SK-N-SH (cell line): ENCODE measurements at regions of chr17 and their contacts with region 1.

Region 1: DNA sequence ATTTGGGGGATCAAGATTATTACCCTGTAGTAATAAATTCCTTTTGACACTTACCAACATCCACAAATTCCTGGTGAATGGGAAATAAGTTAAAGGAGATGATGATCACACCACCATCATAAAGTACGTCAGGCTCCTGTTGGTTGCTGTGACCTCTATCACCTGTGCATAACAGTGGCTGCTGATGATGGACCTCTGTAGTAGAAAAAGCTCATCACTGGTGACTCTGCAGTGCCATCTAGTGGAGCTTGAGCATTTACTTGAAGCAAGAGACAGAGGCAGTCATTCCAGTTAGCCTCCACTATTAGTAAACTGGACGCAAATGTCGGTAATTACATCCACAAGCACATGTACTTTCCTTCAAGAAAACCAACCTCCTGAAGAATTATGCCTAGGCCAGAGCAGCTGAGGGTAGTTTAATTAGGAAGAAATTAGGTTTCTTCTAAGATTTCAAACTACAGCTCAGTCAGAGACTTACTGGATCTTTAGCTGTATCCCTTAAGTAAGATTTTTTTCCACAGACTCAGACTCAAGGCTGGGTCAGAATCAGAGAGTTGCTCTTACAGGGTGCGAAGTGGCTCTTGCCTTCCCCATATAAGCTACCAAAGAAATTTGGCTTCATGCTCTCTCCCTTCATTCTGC is 39.3 kb downstream of the CYB561 start:
- DNase-seq: peak; percentile 82
- H3K4me3 ChIP-seq: no peak overlapping the region
- H3K27ac ChIP-seq: peak overlapping the region; percentile 76 to 84
- H3K4me1 ChIP-seq: peaks cover 17 to 21% of the 10 kb centered on the region in 2 experiments
- H3K27me3 ChIP-seq: no peaks in the 10 kb centered on the region
- CTCF ChIP-seq: peak; percentile 99
- EP300 ChIP-seq: no peak; a peak in 1 of 4 replicates
- RAD21 ChIP-seq: peak; percentile 99

Region 2: DNA sequence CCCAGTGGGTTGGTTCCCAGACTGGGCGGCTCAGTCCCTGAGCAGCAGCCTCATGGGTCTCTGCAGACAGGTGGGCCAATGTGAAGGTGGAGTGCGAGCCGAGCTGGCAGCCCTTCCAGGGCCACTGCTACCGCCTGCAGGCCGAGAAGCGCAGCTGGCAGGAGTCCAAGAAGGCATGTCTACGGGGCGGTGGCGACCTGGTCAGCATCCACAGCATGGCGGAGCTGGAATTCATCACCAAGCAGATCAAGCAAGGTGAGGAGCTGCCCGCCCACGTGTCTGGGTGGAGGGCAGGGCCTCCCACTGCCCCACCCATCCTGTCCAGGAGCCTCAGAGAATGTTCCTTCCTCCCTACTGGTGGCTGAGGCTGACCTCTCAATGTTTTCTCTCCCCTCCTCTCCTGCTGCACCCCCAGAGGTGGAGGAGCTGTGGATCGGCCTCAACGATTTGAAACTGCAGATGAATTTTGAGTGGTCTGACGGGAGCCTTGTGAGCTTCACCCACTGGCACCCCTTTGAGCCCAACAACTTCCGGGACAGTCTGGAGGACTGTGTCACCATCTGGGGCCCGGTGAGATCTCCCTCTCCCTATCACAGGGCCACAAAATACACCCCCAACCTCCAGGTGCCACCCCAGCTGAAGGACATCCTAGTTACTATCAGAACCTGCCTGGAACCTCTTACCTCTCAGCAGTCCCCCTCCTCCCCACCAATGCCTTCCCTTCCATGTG is 735.1 kb before region 1 on chr17:
- CTCF ChIA-PET with region 1: interaction called, 28 read pairs
- POLR2A ChIA-PET with region 1: no interaction called
- DNase-seq: peak; percentile 62
- H3K4me3 ChIP-seq: no peak overlapping the region
- H3K27ac ChIP-seq: peak overlapping the region in 1 of 2 experiments; percentile 16; a peak in 1 of 4 replicates
- H3K4me1 ChIP-seq: peaks cover 0 to 20% of the 10 kb centered on the region in 2 experiments; a peak in 1 of 4 replicates
- H3K27me3 ChIP-seq: no peaks in the 10 kb centered on the region
- CTCF ChIP-seq: no peak
- EP300 ChIP-seq: no peak
- RAD21 ChIP-seq: no peak

Region 3: GRCh38 chr17:62987137-62987536 is 419.7 kb before region 1 on chr17:
- CTCF ChIA-PET with region 1: interaction called, 14 read pairs
- POLR2A ChIA-PET with region 1: no interaction called
- DNase-seq: peak; percentile 18
- H3K4me3 ChIP-seq: no peak overlapping the region
- H3K27ac ChIP-seq: no peak overlapping the region; a peak in 1 of 4 replicates
- H3K4me1 ChIP-seq: peaks cover 0 to 18% of the 10 kb centered on the region in 2 experiments; a peak in 1 of 4 replicates
- H3K27me3 ChIP-seq: no peaks in the 10 kb centered on the region
- CTCF ChIP-seq: peak; percentile 55
- EP300 ChIP-seq: no peak
- RAD21 ChIP-seq: no peak

Region 4: DNA sequence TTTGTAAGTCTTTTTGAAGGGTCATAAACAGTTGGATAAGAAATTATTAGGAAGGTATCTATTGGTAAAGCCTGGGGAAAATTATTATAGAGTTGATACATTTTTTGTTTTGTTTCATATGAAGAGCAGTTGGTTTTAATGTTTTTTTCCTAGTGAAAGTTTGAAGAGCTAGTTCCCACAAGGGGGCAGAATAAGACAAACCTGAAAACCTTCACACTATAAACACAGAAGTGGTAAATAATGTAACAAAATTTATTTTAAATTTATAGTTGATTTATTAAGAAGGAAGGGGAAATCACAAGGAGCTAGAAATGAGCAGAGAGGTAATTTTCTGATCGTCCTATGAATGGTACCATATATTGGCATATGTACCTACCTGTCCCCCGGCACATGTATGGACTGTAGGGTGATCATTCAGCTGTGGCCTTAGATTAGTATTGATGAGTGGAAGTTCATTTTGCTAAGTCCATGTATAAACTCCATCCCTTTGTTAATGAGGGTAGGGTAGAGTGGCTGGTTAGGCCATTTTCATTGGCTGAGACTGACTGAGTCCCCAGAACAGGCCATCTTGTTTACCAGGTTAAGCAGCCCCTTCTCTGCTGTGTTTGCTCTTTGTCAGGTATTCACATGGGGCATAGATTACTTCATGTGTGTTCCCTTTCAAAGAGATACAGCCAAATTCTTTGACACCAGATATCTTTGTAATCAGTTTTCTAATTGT is 324.4 kb before region 1 on chr17:
- CTCF ChIA-PET with region 1: interaction called, 98 read pairs
- POLR2A ChIA-PET with region 1: no interaction called
- DNase-seq: peak; percentile 19
- H3K4me3 ChIP-seq: no peak overlapping the region
- H3K27ac ChIP-seq: peak overlapping the region; percentile 59 to 62
- H3K4me1 ChIP-seq: peaks cover 7 to 20% of the 10 kb centered on the region in 2 experiments; a peak in 3 of 4 replicates
- H3K27me3 ChIP-seq: no peaks in the 10 kb centered on the region
- CTCF ChIP-seq: peak; percentile 85
- EP300 ChIP-seq: no peak
- RAD21 ChIP-seq: peak; percentile 87

Region 5: GRCh38 chr17:63246344-63246743 is 160.5 kb before region 1 on chr17:
- CTCF ChIA-PET with region 1: interaction called, 16 read pairs
- POLR2A ChIA-PET with region 1: no interaction called
- DNase-seq: peak; percentile 55
- H3K4me3 ChIP-seq: no peak overlapping the region
- H3K27ac ChIP-seq: peak overlapping the region; percentile 67 to 84
- H3K4me1 ChIP-seq: peaks cover 11 to 19% of the 10 kb centered on the region in 2 experiments; a peak in 3 of 4 replicates
- H3K27me3 ChIP-seq: no peaks in the 10 kb centered on the region
- CTCF ChIP-seq: no peak
- EP300 ChIP-seq: peak; percentile 59 to 93; a peak in 3 of 4 replicates
- RAD21 ChIP-seq: no peak; the same call in 1 of the 2 replicates

Region 6: DNA sequence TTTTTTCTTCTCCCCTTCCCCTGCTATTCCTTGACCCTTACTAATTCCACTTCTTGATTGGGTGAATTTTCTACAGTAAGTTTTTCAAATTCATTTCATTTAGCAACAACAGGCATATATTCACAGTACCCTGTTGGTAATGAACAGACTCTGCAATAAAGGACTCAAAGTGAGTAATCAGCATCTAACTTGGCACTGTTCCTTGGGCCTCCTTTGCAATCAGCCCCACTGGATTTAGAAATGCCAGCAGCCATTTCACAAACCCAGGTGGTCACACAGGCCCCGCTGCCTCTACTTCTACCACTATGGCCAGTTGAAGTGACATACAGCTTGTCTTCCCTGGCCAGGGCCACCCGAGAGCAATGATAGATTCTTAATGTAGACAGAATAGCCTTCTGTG is 74.5 kb before region 1 on chr17:
- CTCF ChIA-PET with region 1: no interaction called
- POLR2A ChIA-PET with region 1: no interaction called
- DNase-seq: no peak
- H3K4me3 ChIP-seq: no peak overlapping the region
- H3K27ac ChIP-seq: no peak overlapping the region
- H3K4me1 ChIP-seq: peaks cover 0 to 5% of the 10 kb centered on the region in 2 experiments; a peak in 1 of 4 replicates
- H3K27me3 ChIP-seq: no peaks in the 10 kb centered on the region
- CTCF ChIP-seq: no peak
- EP300 ChIP-seq: no peak
- RAD21 ChIP-seq: no peak

Region 7: GRCh38 chr17:63381101-63381729 is 25.6 kb before region 1 on chr17:
- CTCF ChIA-PET with region 1: interaction called, 29 read pairs
- POLR2A ChIA-PET with region 1: no interaction called
- DNase-seq: peak; percentile 71
- H3K4me3 ChIP-seq: no peak overlapping the region
- H3K27ac ChIP-seq: peak overlapping the region; percentile 71 to 96
- H3K4me1 ChIP-seq: peaks cover 38 to 51% of the 10 kb centered on the region in 2 experiments
- H3K27me3 ChIP-seq: no peaks in the 10 kb centered on the region
- CTCF ChIP-seq: no peak
- EP300 ChIP-seq: peak; percentile 43 to 98; a peak in 3 of 4 replicates
- RAD21 ChIP-seq: peak; percentile 13

Region 8: DNA sequence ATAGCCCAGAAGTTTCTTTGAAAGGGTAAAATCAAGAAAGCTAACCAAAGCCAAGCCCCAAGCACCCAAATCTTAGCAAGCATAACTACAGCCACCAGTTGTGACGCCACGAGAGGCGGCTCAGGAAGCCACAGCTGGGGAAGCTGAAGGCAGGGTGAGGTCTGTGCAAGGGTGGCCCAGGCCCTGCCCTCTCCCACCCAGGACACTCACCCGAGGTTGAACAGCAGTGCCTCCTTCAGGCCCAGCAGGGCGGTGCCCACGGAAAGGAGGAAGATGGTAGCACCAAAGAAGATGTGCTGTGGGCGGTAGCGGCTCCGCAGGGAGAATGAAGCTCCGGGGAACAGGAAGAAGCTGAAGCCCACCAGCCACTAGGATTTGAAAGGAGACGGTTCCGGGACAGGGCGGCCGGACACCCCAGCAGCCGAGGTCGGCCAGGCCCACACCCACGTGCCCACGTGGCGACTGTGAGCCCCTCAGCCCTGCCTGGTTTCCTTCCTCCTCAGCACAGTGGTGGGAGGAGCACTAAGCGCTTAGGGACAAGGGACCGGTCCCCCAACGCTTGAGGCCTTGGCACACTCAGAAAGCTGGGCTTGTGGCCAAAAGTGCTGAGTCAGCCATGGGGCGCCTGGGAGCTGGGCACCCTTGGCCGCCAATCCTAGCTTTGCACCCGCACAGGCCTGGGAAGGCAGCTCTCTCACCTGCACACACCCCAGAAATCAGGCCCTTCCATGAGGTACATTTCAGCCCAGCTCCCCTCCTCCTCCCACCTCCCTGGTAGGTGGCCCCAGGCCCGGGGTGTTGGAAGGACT is 28.3 kb after region 1 on chr17:
- CTCF ChIA-PET with region 1: interaction called, 68 read pairs
- POLR2A ChIA-PET with region 1: no interaction called
- DNase-seq: peak; percentile 69
- H3K4me3 ChIP-seq: no peak overlapping the region
- H3K27ac ChIP-seq: peak overlapping the region; percentile 97
- H3K4me1 ChIP-seq: peaks cover 48 to 94% of the 10 kb centered on the region in 2 experiments
- H3K27me3 ChIP-seq: no peaks in the 10 kb centered on the region
- CTCF ChIP-seq: peak; percentile 62
- EP300 ChIP-seq: peak in 1 of 2 experiments; percentile 73; a peak in 2 of 4 replicates
- RAD21 ChIP-seq: peak; percentile 25